ENCODE measurements at regions of chr1 and their contacts with region 1.

Region 1: DNA sequence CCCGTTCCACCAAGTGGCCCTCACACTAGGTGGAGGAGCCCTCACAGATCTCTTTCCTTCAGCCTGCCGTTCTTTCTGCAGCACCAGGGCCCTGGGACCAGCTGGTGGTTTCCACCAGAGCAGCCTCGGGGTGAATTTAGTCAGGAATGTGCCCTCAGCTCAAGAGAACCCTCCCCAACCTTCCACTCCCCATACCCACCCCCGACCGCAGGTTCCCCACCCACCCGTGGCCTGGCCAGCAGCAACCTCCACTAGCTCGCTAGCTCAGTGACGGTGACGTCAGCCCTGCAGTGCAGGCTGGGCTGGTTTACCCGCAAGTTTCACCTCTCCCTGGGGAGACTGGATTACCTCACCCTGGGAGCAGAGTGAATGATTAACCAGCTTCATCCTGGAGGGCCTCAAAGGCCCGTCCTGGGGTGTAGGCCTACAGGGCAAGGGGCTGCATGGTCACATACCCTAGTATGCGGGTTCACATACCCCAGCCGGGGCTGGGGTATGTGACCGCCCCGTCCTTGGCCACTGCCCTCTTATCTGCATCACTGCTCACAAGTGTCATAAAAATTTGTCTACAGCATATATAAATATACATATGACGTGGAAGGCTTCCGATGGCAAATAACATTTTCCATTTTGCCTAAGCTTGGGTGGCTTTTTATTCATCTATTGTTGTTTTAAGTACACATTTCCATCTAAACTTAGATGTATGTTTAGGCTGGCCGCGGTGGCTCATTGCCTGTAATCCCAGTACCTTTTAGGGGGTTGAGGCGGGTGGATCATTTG is 24.5 kb downstream of the ELF3 start:
- DNase-seq: peak; percentile 93
- ATAC-seq: peak; percentile 99
- H3K4me3 ChIP-seq: peak overlapping the region; percentile 54 to 75 (median 57)
- H3K27ac ChIP-seq: peak overlapping the region; percentile 75
- H3K4me1 ChIP-seq: peaks cover 78% of the 10 kb centered on the region
- H3K27me3 ChIP-seq: no peaks in the 10 kb centered on the region
- CTCF ChIP-seq: 0 out of 2 replicates have a peak, but pooled peaks have one; percentile 3
- EP300 ChIP-seq: peak in 1 of 2 experiments; percentile 69; a peak in 1 of 4 replicates
- POLR2A ChIP-seq: peak; percentile 39 to 58; a peak in 3 of 4 replicates
- RAD21 ChIP-seq: no peak

Region 2: DNA sequence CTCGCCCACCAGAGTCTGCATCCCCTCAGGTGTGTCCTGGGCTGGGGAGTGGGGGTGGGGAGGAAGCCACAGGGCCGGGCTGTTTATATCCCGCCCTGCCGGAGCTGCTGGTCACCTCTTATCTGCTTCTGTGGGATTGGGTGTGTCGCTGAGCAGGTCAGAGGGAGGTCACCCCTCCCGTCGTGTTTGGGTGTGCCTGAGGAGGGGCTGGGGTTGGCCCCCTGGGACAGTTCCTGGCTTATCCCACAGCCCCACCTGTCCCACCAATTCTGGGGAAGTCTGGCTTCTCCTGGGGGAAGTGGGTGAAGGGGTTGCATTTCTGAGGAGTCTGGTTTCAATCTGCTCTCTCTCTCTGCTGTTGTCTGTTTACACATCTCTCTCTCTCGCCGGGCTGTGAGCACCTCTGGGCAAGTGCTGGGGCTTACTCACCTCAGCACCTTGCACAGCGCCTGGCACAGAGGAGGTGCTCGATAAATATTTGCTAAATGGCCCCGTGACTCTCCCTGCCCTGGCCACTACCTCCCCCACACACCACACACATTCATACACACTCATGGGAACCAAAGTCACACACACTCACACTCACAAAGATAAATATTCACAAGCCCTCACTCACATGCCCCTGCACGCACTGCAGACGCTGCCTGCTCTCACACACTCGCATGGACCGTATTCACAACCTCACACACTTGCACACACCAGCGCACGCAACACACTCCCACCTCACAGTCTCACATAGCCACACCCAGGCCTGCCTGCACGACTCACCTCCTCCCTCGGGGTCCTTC is 16.2 kb before region 1 on chr1:
- CTCF ChIA-PET with region 1: no interaction called
- POLR2A ChIA-PET with region 1: interaction called, 21 read pairs
- in situ Hi-C with region 1: no loop called
- intact Hi-C with region 1: no loop called
- DNase-seq: peak; percentile 85
- ATAC-seq: peak; percentile 90
- H3K4me3 ChIP-seq: peak overlapping the region; percentile 38 to 74 (median 51)
- H3K27ac ChIP-seq: peak overlapping the region; percentile 42
- H3K4me1 ChIP-seq: peaks cover 69% of the 10 kb centered on the region
- H3K27me3 ChIP-seq: no peaks in the 10 kb centered on the region
- CTCF ChIP-seq: no peak
- EP300 ChIP-seq: peak in 1 of 2 experiments; percentile 59; a peak in 1 of 4 replicates
- POLR2A ChIP-seq: no peak
- RAD21 ChIP-seq: no peak

Region 3: GRCh38 chr1:202046227-202046801 is 11.4 kb after region 1 on chr1:
- CTCF ChIA-PET with region 1: no interaction called
- POLR2A ChIA-PET with region 1: interaction called, 30 read pairs
- in situ Hi-C with region 1: no loop called
- intact Hi-C with region 1: no loop called
- DNase-seq: no peak
- ATAC-seq: peak; percentile 11; the same call in 2 of the 3 replicates
- H3K4me3 ChIP-seq: peak overlapping the region in 1 of 3 experiments; percentile 49; a peak in 2 of 6 replicates
- H3K27ac ChIP-seq: no peak overlapping the region
- H3K4me1 ChIP-seq: peaks cover 80% of the 10 kb centered on the region
- H3K27me3 ChIP-seq: no peaks in the 10 kb centered on the region
- CTCF ChIP-seq: no peak
- EP300 ChIP-seq: peak in 1 of 2 experiments; percentile 68; a peak in 1 of 4 replicates
- POLR2A ChIP-seq: no peak
- RAD21 ChIP-seq: no peak

Region 4: GRCh38 chr1:202576816-202577215 is 541.9 kb after region 1 on chr1:
- CTCF ChIA-PET with region 1: no interaction called
- POLR2A ChIA-PET with region 1: no interaction called
- in situ Hi-C with region 1: no loop called
- intact Hi-C with region 1: no loop called
- DNase-seq: peak; percentile 70
- ATAC-seq: peak; percentile 79
- H3K4me3 ChIP-seq: no peak overlapping the region
- H3K27ac ChIP-seq: no peak overlapping the region
- H3K4me1 ChIP-seq: peaks cover 22% of the 10 kb centered on the region
- H3K27me3 ChIP-seq: no peaks in the 10 kb centered on the region
- CTCF ChIP-seq: no peak
- EP300 ChIP-seq: no peak; a peak in 1 of 4 replicates
- POLR2A ChIP-seq: no peak
- RAD21 ChIP-seq: no peak

Measured in HepG2 (cell line).